GM18951 (cell line): ENCODE measurements at regions of chr1 and their contacts with region 1.

Region 1: GRCh38 chr1:90721210-90722194 is 4.4 kb upstream of the BARHL2 start:
- POLR2A ChIP-seq: no peak

Region 2: GRCh38 chr1:90834886-90835660 is 113.6 kb after region 1 on chr1:
- in situ Hi-C with region 1: loop called (anchors 10 kb)
- POLR2A ChIP-seq: no peak

Region 3: GRCh38 chr1:90964444-90965035 is 243.0 kb after region 1 on chr1:
- in situ Hi-C with region 1: loop called (anchors 10 kb)
- POLR2A ChIP-seq: no peak

Region 4: DNA sequence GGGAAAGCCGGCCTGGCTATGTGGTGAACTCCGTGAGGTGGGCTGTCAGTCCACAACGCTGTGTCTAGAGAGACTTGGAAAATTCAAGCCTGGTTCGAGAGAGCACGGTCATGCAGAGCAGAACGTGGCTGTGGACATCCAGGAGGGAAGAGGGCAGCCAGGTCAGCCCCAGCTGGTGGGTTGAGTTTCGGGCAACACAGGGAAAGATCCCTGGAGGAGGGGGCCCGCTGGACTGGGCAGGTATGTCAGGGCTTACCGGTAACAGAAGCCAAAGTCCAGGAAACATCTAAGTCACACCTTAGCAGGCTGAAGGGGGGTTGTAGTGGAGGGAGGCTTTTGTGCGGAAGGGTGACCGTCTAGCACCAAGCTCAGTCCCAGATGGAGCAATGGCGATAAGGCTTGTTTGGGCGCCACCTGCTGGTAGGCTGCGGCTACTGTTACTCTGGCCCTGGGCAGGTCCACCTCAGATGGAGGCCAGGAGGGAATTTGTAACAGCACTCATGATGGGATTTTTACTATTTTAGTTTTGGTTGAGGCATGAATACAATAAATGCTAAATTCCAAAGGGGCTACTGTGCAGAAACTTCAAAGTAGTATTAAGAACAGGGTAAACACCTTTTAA is 443.6 kb after region 1 on chr1:
- in situ Hi-C with region 1: loop called (anchors 10 kb)
- POLR2A ChIP-seq: no peak